Transverse colon (tissue), 4 donors: ENCODE measurements at regions of chr3 and their contacts with region 1.

Region 1: GRCh38 chr3:186259612-186260383 is 102.2 kb downstream of the DGKG start:
- DNase-seq: peak; percentile 77
- H3K4me3 ChIP-seq: no peak overlapping the region
- H3K27ac ChIP-seq: no peak overlapping the region
- H3K4me1 ChIP-seq: peaks cover 0 to 6% (median 0%) of the 10 kb centered on the region in 4 donors
- H3K27me3 ChIP-seq: no peaks in the 10 kb centered on the region
- CTCF ChIP-seq: peak; percentile 74 to 90 (median 81)
- EP300 ChIP-seq: no peak
- POLR2A ChIP-seq: no peak

Region 2: DNA sequence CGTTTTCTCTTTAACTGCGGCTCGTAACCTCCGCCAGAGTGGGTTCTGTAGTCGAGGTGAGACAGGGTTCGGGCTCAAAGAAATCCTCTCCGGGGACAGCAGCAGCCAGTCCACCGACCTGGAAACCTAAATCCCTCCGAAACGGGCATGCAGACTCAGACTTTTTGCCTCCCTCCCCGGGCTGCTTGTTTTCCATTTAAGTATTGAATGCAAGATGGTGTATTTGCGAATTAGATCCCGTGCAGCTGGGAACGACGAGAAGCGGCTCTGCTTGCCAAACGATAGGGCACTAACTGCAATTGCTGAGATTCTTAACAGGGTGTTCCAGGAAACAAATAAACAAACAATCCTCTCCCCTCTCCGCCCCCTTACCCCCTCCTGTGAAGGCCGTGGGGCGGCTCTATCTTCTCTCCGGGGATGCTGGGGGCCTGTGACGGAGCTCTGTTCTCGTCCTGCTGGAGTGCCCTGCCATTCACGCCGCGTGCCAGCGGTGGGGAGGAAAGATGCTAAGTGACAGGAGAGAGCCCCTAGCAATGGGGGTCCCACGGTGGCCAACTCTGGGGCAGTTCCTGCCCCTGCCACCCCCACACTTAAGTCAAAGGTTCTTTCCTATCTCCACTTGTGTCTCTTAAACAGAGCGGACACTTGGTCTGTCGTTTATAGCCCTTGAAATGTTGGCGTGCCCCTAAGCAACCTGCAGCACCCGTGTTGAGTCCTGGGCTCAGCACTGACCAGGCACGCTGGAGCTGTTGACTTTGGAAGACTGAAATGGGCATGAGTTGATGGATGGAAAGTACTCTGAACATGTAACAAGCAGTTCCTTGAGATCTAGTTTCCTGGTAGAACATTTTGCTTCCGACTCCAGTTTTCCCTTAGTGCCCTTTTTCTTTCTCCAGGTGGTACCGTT is 149.6 kb before region 1 on chr3:
- in situ Hi-C with region 1: no loop called
- intact Hi-C with region 1: no loop called
- DNase-seq: no peak
- H3K4me3 ChIP-seq: peak overlapping the region in 3 of 4 donors; percentile 28 to 74 (median 40)
- H3K27ac ChIP-seq: peak overlapping the region; percentile 72 to 80 (median 77)
- H3K4me1 ChIP-seq: peaks cover 4 to 46% (median 28%) of the 10 kb centered on the region in 4 donors
- H3K27me3 ChIP-seq: peaks cover 83% of the 10 kb centered on the region
- CTCF ChIP-seq: no peak
- EP300 ChIP-seq: no peak
- POLR2A ChIP-seq: no peak

Region 3: GRCh38 chr3:186162221-186162620 is 97.6 kb before region 1 on chr3:
- in situ Hi-C with region 1: no loop called
- intact Hi-C with region 1: no loop called
- DNase-seq: no peak
- H3K4me3 ChIP-seq: no peak overlapping the region
- H3K27ac ChIP-seq: no peak overlapping the region
- H3K4me1 ChIP-seq: no peaks in the 10 kb centered on the region
- H3K27me3 ChIP-seq: peaks cover 4% of the 10 kb centered on the region
- CTCF ChIP-seq: no peak
- EP300 ChIP-seq: no peak
- POLR2A ChIP-seq: no peak

Region 4: DNA sequence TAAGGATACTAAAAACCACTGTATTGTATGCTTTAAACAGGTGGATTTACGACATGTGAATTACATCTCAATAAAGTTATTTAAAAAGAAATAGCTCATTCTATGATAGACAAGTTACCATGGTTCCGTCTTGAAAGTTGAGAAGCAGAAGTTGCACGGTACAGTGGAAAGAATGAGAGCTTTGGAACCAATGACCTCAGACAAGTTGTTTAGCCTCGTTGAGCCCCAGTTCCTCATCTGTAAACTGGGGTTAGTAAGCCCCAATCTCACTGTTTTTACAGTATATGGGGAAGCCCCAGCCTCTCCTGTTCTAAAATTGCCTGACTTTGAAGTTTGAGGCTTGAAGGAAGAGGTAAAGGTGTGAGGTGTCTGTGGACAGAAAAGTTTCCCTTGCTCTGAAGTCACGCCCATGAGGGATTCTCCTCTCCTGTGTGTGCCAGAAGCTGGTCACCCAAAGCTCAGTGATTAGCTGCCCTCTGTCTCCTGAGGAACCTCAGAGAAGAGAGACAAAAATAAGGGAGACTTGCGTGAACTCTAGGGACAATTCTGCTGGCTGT is 274.4 kb after region 1 on chr3:
- in situ Hi-C with region 1: loop called in 3 of 4 experiments (anchors 5 to 10 kb)
- intact Hi-C with region 1: no loop called
- DNase-seq: no peak
- H3K4me3 ChIP-seq: no peak overlapping the region
- H3K27ac ChIP-seq: no peak overlapping the region
- H3K4me1 ChIP-seq: peaks cover 0 to 7% (median 0%) of the 10 kb centered on the region in 4 donors
- H3K27me3 ChIP-seq: no peaks in the 10 kb centered on the region
- CTCF ChIP-seq: no peak
- EP300 ChIP-seq: no peak
- POLR2A ChIP-seq: no peak

Region 5: GRCh38 chr3:186540221-186540834 is 280.5 kb after region 1 on chr3:
- in situ Hi-C with region 1: loop called (anchors 5 to 10 kb)
- intact Hi-C with region 1: loop called (anchors 2 kb)
- DNase-seq: peak; percentile 78
- H3K4me3 ChIP-seq: no peak overlapping the region
- H3K27ac ChIP-seq: no peak overlapping the region
- H3K4me1 ChIP-seq: peaks cover 0 to 5% (median 2%) of the 10 kb centered on the region in 4 donors
- H3K27me3 ChIP-seq: no peaks in the 10 kb centered on the region
- CTCF ChIP-seq: peak; percentile 72 to 87 (median 79)
- EP300 ChIP-seq: no peak
- POLR2A ChIP-seq: no peak